ENCODE measurements at regions of chr9 and their contacts with region 1.

Region 1: GRCh38 chr9:4984621-4985385 is at the start of gene JAK2:
- DNase-seq: peak; percentile 97
- H3K4me3 ChIP-seq: peak within 1 kb of the TSS; percentile 66 to 87 (median 78)
- H3K27ac ChIP-seq: peak within 1 kb of the TSS; percentile 96 to 99 (median 98)
- H3K4me1 ChIP-seq: peaks cover 32 to 80% (median 65%) of the 10 kb centered on the region in 6 donors
- H3K27me3 ChIP-seq: no peaks in the 10 kb centered on the region
- CTCF ChIP-seq: peak in 7 of 11 experiments; percentile 36 to 67 (median 58)
- POLR2A ChIP-seq: peak; percentile 65 to 86 (median 80)
- total RNA-seq, gene JAK2: 40.9 to 61.2 (median 54.6) TPM

Region 2: DNA sequence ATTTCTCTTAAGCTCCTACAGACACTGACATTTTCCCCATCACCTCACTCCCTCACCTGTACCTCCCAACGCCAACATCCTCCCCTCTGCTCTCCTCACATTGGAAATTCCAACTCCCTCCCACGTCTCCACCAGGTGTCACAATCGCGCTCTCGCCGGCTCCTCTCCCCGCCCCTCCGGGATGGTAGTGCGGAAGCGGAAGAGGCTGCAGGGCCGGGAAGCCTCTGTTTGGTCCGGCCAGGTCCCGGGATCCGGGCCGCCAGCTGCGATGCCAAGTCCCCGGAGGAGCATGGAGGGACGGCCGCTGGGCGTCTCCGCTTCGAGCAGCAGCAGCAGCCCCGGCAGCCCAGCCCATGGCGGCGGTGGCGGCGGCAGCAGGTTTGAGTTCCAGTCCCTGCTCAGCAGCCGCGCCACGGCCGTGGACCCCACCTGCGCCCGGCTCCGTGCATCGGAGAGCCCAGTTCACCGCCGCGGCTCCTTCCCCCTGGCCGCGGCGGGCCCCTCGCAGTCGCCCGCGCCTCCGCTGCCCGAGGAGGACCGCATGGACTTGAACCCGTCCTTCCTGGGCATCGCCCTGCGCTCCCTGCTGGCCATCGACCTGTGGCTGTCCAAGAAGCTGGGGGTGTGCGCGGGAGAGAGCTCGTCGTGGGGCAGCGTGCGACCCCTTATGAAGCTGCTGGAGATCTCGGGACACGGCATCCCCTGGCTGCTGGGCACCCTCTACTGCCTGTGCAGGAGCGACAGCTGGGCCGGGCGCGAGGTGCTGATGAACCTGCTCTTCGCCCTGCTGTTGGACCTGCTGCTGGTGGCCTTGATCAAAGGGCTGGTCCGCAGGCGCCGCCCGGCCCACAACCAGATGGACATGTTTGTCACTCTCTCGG is 322.5 kb before region 1 on chr9 and contains the start of gene PLPP6:
- intact Hi-C with region 1: loop called (anchors 10 kb)
- DNase-seq: peak; percentile 96
- H3K4me3 ChIP-seq: peak within 1 kb of the TSS; percentile 66 to 95 (median 77)
- H3K27ac ChIP-seq: peak within 1 kb of the TSS; percentile 69 to 95 (median 88)
- H3K4me1 ChIP-seq: peaks cover 27 to 61% (median 51%) of the 10 kb centered on the region in 6 donors
- H3K27me3 ChIP-seq: no peaks in the 10 kb centered on the region
- CTCF ChIP-seq: peak in 10 of 11 experiments; percentile 9 to 80 (median 56)
- POLR2A ChIP-seq: peak in 1 of 3 donors; percentile 48
- total RNA-seq, gene PLPP6: 4.5 to 11.6 (median 7.8) TPM

Region 3: DNA sequence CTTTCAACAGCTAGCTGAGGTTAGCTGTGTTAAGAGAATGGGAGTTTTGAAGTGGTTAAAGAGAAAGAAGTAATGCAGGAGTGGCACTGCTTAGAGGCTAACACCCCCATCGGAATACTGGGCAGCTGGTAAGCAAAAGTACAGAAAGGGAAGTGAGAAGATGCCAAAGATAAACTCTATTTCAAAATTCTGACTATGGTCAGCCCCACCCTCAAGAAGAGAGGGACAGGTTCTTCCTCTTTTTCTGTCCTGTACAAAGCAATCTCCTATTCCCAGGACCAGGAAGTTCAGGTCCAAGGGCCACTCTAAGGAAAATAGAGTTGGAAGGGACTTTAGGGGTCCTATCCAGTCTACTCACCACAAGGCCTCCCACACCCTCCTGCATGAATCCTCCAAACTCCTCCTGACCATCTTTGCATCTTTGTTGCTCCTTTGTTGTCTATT is 45.7 kb before region 1 on chr9:
- intact Hi-C with region 1: loop called (anchors 10 kb)
- DNase-seq: no peak
- H3K4me3 ChIP-seq: no peak overlapping the region
- H3K27ac ChIP-seq: peak overlapping the region in 7 of 8 donors; percentile 30 to 87 (median 76)
- H3K4me1 ChIP-seq: peaks cover 18 to 78% (median 48%) of the 10 kb centered on the region in 6 donors
- H3K27me3 ChIP-seq: no peaks in the 10 kb centered on the region
- CTCF ChIP-seq: peak in 1 of 11 experiments; percentile 9
- POLR2A ChIP-seq: no peak